ENCODE measurements at regions of chr10 and their contacts with region 1.

Region 1: GRCh38 chr10:13674641-13675588 is 88.2 kb downstream of the PRPF18 start:
- DNase-seq: no peak
- H3K4me3 ChIP-seq: no peak overlapping the region
- H3K27ac ChIP-seq: peak overlapping the region in 1 of 4 donors; percentile 21
- H3K4me1 ChIP-seq: no peaks in the 10 kb centered on the region
- H3K27me3 ChIP-seq: no peaks in the 10 kb centered on the region
- CTCF ChIP-seq: no peak
- EP300 ChIP-seq: no peak
- POLR2A ChIP-seq: no peak

Region 2: GRCh38 chr10:13511409-13511808 is 163.5 kb before region 1 on chr10:
- in situ Hi-C with region 1: no loop called
- intact Hi-C with region 1: no loop called
- DNase-seq: no peak
- H3K4me3 ChIP-seq: no peak overlapping the region
- H3K27ac ChIP-seq: no peak overlapping the region
- H3K4me1 ChIP-seq: no peaks in the 10 kb centered on the region
- H3K27me3 ChIP-seq: no peaks in the 10 kb centered on the region
- CTCF ChIP-seq: no peak
- EP300 ChIP-seq: no peak
- POLR2A ChIP-seq: no peak

Region 3: DNA sequence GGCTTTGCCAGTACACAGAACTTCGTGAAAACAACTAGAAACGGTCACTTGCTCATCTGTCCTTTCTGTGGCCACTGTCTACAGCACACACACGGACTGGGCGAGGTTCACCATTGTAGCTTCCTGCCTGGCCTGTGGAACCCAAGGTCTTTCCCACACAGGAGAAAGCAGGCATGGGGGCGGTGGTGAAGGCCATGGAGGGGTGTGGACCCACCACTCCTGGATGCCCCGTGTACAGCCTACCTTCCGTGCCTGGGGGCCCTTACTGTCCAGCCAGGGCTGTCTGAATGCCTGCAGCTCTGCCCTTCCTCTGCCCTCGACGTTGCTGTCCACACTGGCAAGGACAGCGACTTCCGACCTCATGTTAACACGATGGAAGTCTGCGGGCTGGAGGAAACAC is 20.7 kb after region 1 on chr10:
- in situ Hi-C with region 1: no loop called
- intact Hi-C with region 1: loop called (anchors 1 kb)
- DNase-seq: no peak
- H3K4me3 ChIP-seq: no peak overlapping the region
- H3K27ac ChIP-seq: no peak overlapping the region
- H3K4me1 ChIP-seq: no peaks in the 10 kb centered on the region
- H3K27me3 ChIP-seq: no peaks in the 10 kb centered on the region
- CTCF ChIP-seq: no peak
- EP300 ChIP-seq: no peak
- POLR2A ChIP-seq: no peak